ENCODE measurements at regions of chr4 and their contacts with region 1.

Region 1: DNA sequence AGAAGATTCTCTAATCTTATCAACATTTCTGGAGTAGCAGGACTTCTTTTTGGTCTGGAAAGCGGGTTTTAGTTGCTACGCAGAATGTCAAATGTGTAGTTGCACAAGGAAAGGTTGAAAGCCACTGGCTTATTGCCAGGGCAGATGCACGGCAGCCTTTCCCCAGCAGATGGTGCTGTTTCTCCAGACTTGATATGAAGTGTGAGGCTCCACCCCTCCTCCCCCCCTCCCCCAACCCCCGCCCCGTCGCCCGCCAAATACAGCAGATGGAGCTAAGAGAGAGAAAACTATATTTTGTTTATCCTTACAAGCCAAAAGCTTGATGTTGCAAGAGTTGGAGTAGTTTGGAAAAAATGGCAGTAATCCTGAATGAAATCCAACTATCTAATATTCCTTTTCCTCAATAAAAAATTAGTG is 32.0 kb downstream of the ENOPH1 start:
- DNase-seq: peak; percentile 79 to 88
- ATAC-seq: peak; percentile 85 to 93 (median 88)
- H3K4me3 ChIP-seq: no peak overlapping the region
- H3K27ac ChIP-seq: no peak overlapping the region
- H3K4me1 ChIP-seq: peaks cover 0 to 11% (median 3%) of the 10 kb centered on the region in 9 donors
- H3K27me3 ChIP-seq: no peaks in the 10 kb centered on the region
- CTCF ChIP-seq: peak; percentile 80 to 96 (median 89)

Region 2: GRCh38 chr4:82739316-82740179 is 277.1 kb after region 1 on chr4:
- intact Hi-C with region 1: loop called (anchors 1 to 5 kb)
- DNase-seq: peak; percentile 54 to 75
- ATAC-seq: peak; percentile 77 to 95 (median 94)
- H3K4me3 ChIP-seq: no peak overlapping the region
- H3K27ac ChIP-seq: no peak overlapping the region
- H3K4me1 ChIP-seq: no peaks in the 10 kb centered on the region
- H3K27me3 ChIP-seq: peaks cover 0 to 4% (median 0%) of the 10 kb centered on the region in 7 donors
- CTCF ChIP-seq: peak; percentile 81 to 99 (median 92)

Region 3: DNA sequence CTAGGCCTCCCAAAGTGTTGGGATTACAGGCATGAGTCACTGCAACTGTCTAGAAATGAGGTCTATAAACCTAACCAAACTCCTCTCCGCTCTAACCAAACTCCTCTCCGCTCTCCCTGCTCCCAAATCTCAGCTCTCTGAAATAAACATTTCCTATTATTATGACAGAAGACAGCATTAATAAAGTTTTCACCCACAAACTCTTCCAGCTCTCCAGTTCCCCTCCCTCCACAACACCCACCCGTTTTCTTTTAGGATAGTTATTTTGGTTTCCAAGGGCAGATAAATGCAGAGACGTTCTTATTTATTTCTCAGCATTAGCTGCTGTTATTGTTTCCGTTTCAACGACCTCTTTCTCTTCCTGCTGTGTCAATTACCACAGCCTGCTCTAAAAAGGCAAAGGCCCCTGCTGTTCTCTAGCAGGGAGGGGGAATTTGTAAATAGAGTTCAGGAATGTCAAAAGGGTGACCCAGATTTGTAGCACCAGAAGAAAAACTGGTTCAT is 349.5 kb after region 1 on chr4:
- intact Hi-C with region 1: loop called in 3 of 10 experiments (anchors 10 kb)
- DNase-seq: no peak
- ATAC-seq: peak in 2 of 8 donors; percentile 22 to 26
- H3K4me3 ChIP-seq: no peak overlapping the region
- H3K27ac ChIP-seq: peak overlapping the region in 1 of 10 donors; percentile 48
- H3K4me1 ChIP-seq: peaks cover 0 to 15% (median 0%) of the 10 kb centered on the region in 9 donors
- H3K27me3 ChIP-seq: no peaks in the 10 kb centered on the region
- CTCF ChIP-seq: no peak

Region 4: GRCh38 chr4:83261307-83261706 is 798.9 kb after region 1 on chr4:
- intact Hi-C with region 1: loop called in 5 of 10 experiments (anchors 2 to 5 kb)
- DNase-seq: no peak
- ATAC-seq: no peak
- H3K4me3 ChIP-seq: no peak overlapping the region
- H3K27ac ChIP-seq: no peak overlapping the region
- H3K4me1 ChIP-seq: peaks cover 0 to 22% (median 5%) of the 10 kb centered on the region in 9 donors
- H3K27me3 ChIP-seq: no peaks in the 10 kb centered on the region
- CTCF ChIP-seq: no peak